ENCODE measurements at regions of chr2 and their contacts with region 1.

Region 1: DNA sequence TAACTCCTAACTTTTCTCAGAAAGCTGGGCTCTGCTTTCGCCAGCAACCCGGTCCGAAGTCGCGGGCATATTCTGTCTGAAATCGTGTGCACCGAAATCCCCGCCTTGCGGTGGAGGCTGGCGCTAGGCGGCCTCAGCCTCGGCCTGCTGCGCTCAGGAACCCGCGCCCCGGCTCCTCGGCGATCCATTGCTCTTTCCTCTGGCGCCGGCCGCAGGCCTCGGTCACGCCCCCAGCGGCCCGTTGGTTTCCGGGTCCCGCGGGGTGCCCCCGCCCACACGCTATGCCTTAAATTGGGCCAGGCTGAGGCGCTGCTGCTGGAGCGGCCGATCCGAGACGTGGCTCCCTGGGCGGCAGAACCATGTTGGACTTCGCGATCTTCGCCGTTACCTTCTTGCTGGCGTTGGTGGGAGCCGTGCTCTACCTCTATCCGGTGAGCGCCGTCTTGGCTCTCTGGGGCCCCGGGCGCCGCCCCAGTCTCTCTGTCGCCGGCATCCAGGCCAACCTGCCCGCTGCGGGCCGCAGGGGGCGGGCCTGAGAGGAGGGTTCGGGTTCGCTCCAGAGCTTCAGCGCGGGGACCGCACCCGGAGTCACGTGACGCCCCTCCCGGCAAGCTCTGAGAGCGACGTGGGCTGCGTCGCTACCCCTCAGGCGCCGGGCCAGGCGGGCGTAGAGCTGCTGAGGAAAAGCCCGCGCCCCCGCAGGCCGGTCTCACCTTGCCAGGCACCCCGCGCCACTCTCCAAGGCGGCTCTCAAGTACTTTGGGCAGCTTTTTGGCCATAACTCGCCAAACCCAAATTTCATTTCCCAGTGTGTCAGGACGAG is at the start of gene CYP20A1:
- DNase-seq: peak; percentile 98
- ATAC-seq: peak; percentile 86
- H3K4me3 ChIP-seq: peak within 1 kb of the TSS; percentile 63 to 98 (median 95)
- H3K4me3 Mint-ChIP-seq: peak within 1 kb of the TSS; percentile 96
- H3K27ac ChIP-seq: peak within 1 kb of the TSS; percentile 88 to 94
- H3K27ac Mint-ChIP-seq: peak within 1 kb of the TSS; percentile 98
- H3K4me1 ChIP-seq: peaks cover 17 to 19% of the 10 kb centered on the region in 2 donors
- H3K4me1 Mint-ChIP-seq: peaks cover 31% of the 10 kb centered on the region
- H3K27me3 ChIP-seq: no peaks in the 10 kb centered on the region
- H3K27me3 Mint-ChIP-seq: no peaks in the 10 kb centered on the region
- CTCF ChIP-seq: no peak
- total RNA-seq, gene CYP20A1: 38.5 and 40.8 TPM in 2 replicates

Region 2: DNA sequence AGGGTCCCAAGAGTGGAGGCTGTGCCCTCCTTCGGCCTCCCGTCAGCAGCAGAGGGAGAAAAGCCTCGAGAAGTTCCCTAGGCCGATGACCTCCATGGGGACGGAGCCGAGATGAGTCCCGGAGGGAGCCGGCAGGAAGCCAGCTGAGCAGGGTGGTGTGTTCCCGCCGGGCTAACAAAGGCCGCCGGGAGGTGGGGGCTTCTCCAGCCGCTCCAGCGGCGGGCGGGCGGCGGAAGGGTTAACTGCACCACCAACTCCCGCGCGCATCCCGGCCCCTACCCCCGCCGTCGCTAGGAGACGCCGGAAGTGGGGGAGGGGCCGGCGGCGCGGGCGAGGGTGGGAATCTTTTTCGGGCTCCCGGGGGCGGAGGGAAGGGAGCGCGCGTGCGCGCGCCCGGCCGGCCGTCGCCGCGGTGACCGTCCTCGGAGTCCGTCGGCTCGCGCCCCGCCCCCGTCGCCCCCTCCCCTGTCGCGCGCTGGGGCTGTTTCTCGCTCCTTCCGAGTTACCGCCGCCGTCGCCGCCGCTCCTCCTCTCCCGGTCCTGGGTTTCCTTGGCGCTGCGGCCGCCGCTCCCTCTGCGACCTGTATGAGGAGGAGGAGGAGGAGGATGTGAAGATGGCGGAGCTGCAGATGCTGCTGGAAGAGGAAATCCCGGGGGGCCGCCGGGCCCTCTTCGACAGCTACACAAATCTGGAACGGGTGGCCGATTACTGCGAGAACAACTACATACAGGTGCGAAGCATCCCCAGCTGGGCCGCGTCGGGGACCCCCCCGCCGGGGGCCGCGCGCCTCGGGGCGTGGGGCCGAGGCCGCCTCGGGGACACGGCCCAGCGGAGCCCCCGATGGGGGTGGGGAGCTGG is 89.2 kb after region 1 on chr2 and contains the start of gene ABI2:
- CTCF ChIA-PET with region 1: interaction called, 3 read pairs
- POLR2A ChIA-PET with region 1: interaction called, 3 read pairs
- intact Hi-C with region 1: loop called (anchors 2 kb)
- DNase-seq: peak; percentile 63
- ATAC-seq: peak; percentile 69
- H3K4me3 ChIP-seq: peak within 1 kb of the TSS; percentile 70 to 84 (median 78)
- H3K4me3 Mint-ChIP-seq: peak within 1 kb of the TSS; percentile 91
- H3K27ac ChIP-seq: peak within 1 kb of the TSS in 1 of 2 donors; percentile 63
- H3K27ac Mint-ChIP-seq: peak within 1 kb of the TSS; percentile 90
- H3K4me1 ChIP-seq: peaks cover 8 to 14% of the 10 kb centered on the region in 2 donors
- H3K4me1 Mint-ChIP-seq: peaks cover 23% of the 10 kb centered on the region
- H3K27me3 ChIP-seq: no peaks in the 10 kb centered on the region
- H3K27me3 Mint-ChIP-seq: no peaks in the 10 kb centered on the region
- CTCF ChIP-seq: no peak
- total RNA-seq, gene ABI2: 32.7 and 35.7 TPM in 2 replicates

Measured in B cell (primary cell).